T-cell (primary cell): ENCODE measurements at regions of chr1 and their contacts with region 1.

Region 1: GRCh38 chr1:219759095-219759494 is 146.2 kb upstream of the ZC3H11B start:
- DNase-seq: no peak
- ATAC-seq: no peak
- H3K4me3 ChIP-seq: no peak overlapping the region
- H3K4me3 Mint-ChIP-seq: no peak overlapping the region
- H3K27ac ChIP-seq: no peak overlapping the region
- H3K27ac Mint-ChIP-seq: no peak overlapping the region
- H3K4me1 ChIP-seq: no peaks in the 10 kb centered on the region
- H3K4me1 Mint-ChIP-seq: no peaks in the 10 kb centered on the region
- H3K27me3 ChIP-seq: peaks cover 0 to 3% of the 10 kb centered on the region in 2 experiments
- H3K27me3 Mint-ChIP-seq: peaks cover 0 to 9% of the 10 kb centered on the region in 2 donors

Region 2: GRCh38 chr1:218620956-218621355 is 1138.1 kb before region 1 on chr1:
- CTCF ChIA-PET with region 1: no interaction called
- POLR2A ChIA-PET with region 1: no interaction called
- DNase-seq: no peak
- ATAC-seq: no peak
- H3K4me3 ChIP-seq: no peak overlapping the region
- H3K4me3 Mint-ChIP-seq: no peak overlapping the region
- H3K27ac ChIP-seq: no peak overlapping the region
- H3K27ac Mint-ChIP-seq: no peak overlapping the region
- H3K4me1 ChIP-seq: no peaks in the 10 kb centered on the region
- H3K4me1 Mint-ChIP-seq: no peaks in the 10 kb centered on the region
- H3K27me3 ChIP-seq: no peaks in the 10 kb centered on the region
- H3K27me3 Mint-ChIP-seq: no peaks in the 10 kb centered on the region

Region 3: DNA sequence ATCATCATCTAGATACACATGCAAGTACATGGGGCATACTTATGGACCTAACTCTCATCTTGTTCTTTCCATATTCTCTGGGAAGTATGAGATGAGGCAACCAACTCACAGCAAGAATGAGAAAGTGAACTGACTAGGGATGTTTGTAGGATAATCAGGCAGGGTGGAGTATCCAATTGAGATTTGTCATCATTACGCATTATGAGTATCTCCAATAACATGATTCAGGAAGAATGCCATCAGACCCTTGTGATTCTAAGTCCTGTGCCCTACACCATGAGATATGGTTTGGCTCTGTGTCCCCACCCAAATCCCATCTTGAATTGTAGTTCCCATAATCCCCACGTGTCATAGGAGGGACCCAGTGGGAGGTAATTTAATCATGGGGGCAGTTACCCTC is 15.3 kb after region 1 on chr1:
- CTCF ChIA-PET with region 1: no interaction called
- POLR2A ChIA-PET with region 1: no interaction called
- DNase-seq: no peak
- ATAC-seq: no peak
- H3K4me3 ChIP-seq: no peak overlapping the region
- H3K4me3 Mint-ChIP-seq: no peak overlapping the region
- H3K27ac ChIP-seq: no peak overlapping the region
- H3K27ac Mint-ChIP-seq: no peak overlapping the region
- H3K4me1 ChIP-seq: no peaks in the 10 kb centered on the region
- H3K4me1 Mint-ChIP-seq: no peaks in the 10 kb centered on the region
- H3K27me3 ChIP-seq: no peaks in the 10 kb centered on the region
- H3K27me3 Mint-ChIP-seq: no peaks in the 10 kb centered on the region

Region 4: DNA sequence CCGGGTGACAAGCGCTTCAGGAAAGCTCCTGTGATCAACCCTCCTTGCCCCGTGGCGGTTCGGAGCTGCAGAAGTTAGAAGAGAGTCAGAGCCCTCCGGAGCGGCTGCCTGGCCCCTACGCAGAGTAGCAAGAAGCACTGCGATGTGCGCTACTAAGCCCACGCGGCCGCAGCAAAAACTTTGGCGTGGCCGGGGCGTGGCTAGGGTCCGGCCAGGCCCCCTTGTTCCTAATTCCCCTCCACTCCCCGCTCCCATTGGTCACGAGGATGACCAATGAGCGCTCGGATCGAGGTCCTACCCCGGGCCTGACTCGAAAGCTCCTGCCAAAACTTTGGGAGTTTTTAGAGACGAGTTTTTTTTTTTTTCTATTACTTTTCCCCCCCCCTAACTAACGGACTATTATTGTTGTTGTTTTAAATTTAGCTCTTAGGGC is 1120.0 kb after region 1 on chr1 and contains the start of gene HLX:
- CTCF ChIA-PET with region 1: no interaction called
- POLR2A ChIA-PET with region 1: interaction called in 1 of 2 experiments, 19 read pairs
- DNase-seq: peak in 3 of 35 experiments; percentile 10 to 54 (median 34)
- ATAC-seq: peak in 3 of 4 experiments; percentile 11 to 42 (median 37)
- H3K4me3 ChIP-seq: peak within 1 kb of the TSS; percentile 10 to 52
- H3K4me3 Mint-ChIP-seq: peak within 1 kb of the TSS; percentile 65 to 82 (median 74)
- H3K27ac ChIP-seq: no peak within 1 kb of the TSS
- H3K27ac Mint-ChIP-seq: peak within 1 kb of the TSS in 1 of 2 donors; percentile 39
- H3K4me1 ChIP-seq: peaks cover 4 to 28% of the 10 kb centered on the region in 2 experiments
- H3K4me1 Mint-ChIP-seq: peaks cover 22 to 37% (median 36%) of the 10 kb centered on the region in 3 donors
- H3K27me3 ChIP-seq: peaks cover 0 to 72% of the 10 kb centered on the region in 2 experiments
- H3K27me3 Mint-ChIP-seq: peaks cover 64 to 80% of the 10 kb centered on the region in 2 donors
- total RNA-seq, gene HLX: 0.18 to 0.46 (median 0.37) TPM in 4 of 5 donors, not detected in the other